Gastrocnemius medialis (tissue), 4 donors: ENCODE measurements at regions of chr10 and their contacts with region 1.

Region 1: DNA sequence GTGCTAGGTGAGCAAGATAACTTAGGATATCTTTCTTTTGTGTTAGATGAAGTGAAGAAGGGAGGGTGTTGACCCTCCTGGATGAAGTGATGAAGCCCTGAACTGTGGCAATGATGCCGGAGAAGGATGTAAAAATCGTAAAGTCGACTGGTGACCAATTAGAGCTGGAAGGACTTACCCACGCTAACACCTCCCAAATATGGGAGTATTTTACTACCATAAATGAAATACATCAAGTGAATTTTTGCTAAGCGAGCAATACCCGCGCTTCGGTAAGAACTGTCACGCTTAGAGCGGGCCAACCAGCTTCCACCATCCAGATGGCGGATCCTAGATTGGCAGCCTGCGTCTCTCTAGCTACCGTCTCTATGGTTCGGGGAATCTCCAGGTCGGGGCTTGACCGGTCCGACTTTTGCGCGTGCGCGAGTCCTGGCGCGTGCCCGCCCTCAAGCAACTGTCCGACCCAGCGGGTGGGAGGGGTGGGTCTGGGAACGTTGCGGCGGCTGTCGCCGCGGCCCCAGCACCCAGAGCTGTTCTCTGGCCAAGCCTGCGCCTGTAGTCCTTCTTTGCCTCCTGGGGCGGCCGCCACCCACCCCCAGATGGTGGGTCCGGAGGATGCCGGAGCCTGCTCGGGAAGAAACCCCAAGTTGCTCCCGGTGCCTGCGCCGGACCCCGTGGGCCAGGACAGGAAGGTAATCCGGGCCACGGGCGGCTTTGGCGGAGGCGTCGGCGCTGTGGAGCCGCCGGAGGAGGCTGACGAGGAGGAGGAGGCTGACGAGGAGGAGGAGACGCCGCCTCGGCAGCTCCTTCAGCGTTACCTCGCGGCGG is at the start of gene TBC1D12:
- DNase-seq: peak; percentile 91 to 94
- ATAC-seq: peak; percentile 90 to 93
- H3K4me3 ChIP-seq: peak within 1 kb of the TSS; percentile 70 to 95 (median 82)
- H3K27ac ChIP-seq: peak within 1 kb of the TSS; percentile 87 to 97 (median 90)
- H3K4me1 ChIP-seq: peaks cover 21% of the 10 kb centered on the region in 2 donors
- H3K27me3 ChIP-seq: peaks cover 0 to 6% (median 3%) of the 10 kb centered on the region in 3 donors
- CTCF ChIP-seq: no peak
- POLR2A ChIP-seq: peak; percentile 78 to 82
- total RNA-seq, gene TBC1D12: 7.4 to 11.4 (median 7.8) TPM

Region 2: DNA sequence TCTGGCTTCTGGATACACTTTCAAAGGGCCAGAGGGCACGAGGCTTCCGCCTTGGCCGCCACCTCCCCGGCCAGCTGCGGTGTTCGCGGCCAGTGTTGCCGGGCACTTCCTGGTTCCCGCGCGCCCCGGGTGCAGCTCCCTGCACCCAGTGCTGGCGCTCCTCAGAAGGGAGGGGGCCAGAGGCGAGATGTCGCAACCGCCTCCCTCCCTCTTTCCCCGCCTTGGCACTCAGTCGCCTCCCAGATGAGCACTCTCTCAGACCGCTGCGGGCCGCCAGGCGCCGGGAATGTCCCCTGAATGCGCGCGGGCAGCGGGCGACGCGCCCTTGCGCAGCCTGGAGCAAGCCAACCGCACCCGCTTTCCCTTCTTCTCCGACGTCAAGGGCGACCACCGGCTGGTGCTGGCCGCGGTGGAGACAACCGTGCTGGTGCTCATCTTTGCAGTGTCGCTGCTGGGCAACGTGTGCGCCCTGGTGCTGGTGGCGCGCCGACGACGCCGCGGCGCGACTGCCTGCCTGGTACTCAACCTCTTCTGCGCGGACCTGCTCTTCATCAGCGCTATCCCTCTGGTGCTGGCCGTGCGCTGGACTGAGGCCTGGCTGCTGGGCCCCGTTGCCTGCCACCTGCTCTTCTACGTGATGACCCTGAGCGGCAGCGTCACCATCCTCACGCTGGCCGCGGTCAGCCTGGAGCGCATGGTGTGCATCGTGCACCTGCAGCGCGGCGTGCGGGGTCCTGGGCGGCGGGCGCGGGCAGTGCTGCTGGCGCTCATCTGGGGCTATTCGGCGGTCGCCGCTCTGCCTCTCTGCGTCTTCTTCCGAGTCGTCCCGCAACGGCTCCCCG is 835.6 kb before region 1 on chr10 and contains the start of gene FFAR4:
- in situ Hi-C with region 1: no loop called
- intact Hi-C with region 1: no loop called
- DNase-seq: peak in 1 of 2 donors; percentile 25
- ATAC-seq: no peak
- H3K4me3 ChIP-seq: peak within 1 kb of the TSS in 3 of 4 donors; percentile 29 to 46 (median 39)
- H3K27ac ChIP-seq: no peak within 1 kb of the TSS
- H3K4me1 ChIP-seq: no peaks in the 10 kb centered on the region
- H3K27me3 ChIP-seq: peaks cover 24 to 32% (median 27%) of the 10 kb centered on the region in 3 donors
- CTCF ChIP-seq: no peak
- POLR2A ChIP-seq: no peak
- total RNA-seq, gene FFAR4: 0.10 to 0.17 TPM in 2 of 4 donors, not detected in the others

Region 3: GRCh38 chr10:93622942-93623341 is 779.3 kb before region 1 on chr10:
- in situ Hi-C with region 1: no loop called
- intact Hi-C with region 1: no loop called
- DNase-seq: no peak
- ATAC-seq: no peak
- H3K4me3 ChIP-seq: no peak overlapping the region
- H3K27ac ChIP-seq: no peak overlapping the region
- H3K4me1 ChIP-seq: no peaks in the 10 kb centered on the region
- H3K27me3 ChIP-seq: no peaks in the 10 kb centered on the region
- CTCF ChIP-seq: no peak
- POLR2A ChIP-seq: no peak

Region 4: GRCh38 chr10:94362360-94363250 is 39.6 kb before region 1 on chr10 and contains the start of gene NOC3L:
- in situ Hi-C with region 1: no loop called
- intact Hi-C with region 1: loop called (anchors 1 kb)
- DNase-seq: peak; percentile 86 to 92
- ATAC-seq: peak; percentile 98 to 99
- H3K4me3 ChIP-seq: peak within 1 kb of the TSS; percentile 60 to 88 (median 78)
- H3K27ac ChIP-seq: peak within 1 kb of the TSS; percentile 72 to 85 (median 78)
- H3K4me1 ChIP-seq: peaks cover 16 to 17% of the 10 kb centered on the region in 2 donors
- H3K27me3 ChIP-seq: no peaks in the 10 kb centered on the region
- CTCF ChIP-seq: peak; percentile 60 to 87 (median 82)
- POLR2A ChIP-seq: no peak
- total RNA-seq, gene NOC3L: 10.3 to 14.5 (median 12.5) TPM

Region 5: GRCh38 chr10:94500063-94500462 is 97.8 kb after region 1 on chr10:
- in situ Hi-C with region 1: no loop called
- intact Hi-C with region 1: no loop called
- DNase-seq: no peak
- ATAC-seq: no peak
- H3K4me3 ChIP-seq: no peak overlapping the region
- H3K27ac ChIP-seq: no peak overlapping the region
- H3K4me1 ChIP-seq: peaks cover 0 to 6% of the 10 kb centered on the region in 2 donors
- H3K27me3 ChIP-seq: no peaks in the 10 kb centered on the region
- CTCF ChIP-seq: no peak
- POLR2A ChIP-seq: no peak

Region 6: DNA sequence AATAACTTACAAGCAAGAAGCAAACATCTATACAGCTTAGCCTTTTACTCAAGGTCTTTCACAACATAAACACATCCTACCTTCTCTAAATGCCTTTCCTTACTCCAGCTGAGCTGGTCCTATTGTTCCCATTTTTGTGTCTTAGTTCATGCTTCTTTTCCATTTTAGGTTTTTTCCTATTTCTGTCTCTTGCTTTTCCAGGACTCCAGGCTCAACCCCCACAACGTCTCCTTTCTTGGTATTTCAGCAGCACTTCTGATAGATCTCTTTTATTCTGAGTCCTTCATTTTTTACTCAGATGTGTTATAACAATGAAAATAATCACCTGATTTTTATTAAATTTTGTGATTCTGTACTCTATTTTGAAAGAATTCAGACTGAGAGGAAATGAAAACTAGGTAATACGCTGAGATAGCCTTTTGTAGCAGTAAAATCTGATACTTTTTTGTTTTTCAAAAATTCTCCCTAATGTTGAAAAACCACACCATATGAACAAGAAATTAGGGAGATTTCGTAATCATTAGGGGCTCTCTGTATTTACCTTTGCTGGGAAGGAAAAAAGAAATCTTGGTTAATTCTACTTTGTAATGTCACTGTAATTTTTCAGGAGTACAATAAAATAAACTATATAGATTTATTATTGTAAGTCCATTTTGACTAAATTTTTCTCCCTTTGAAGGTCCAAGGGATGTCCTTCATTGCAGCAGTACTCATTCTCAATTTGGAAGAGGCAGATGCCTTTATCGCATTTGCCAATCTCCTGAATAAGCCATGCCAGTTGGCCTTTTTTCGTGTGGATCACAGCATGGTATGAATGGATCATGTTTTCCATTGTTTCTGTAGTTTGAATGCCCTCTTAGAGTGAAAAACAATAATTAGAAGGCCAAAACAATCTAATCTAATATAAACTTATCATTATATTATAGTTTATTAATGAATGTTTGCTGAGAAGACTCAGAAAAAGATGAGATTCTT is 119.3 kb after region 1 on chr10:
- in situ Hi-C with region 1: no loop called
- intact Hi-C with region 1: no loop called
- DNase-seq: no peak
- ATAC-seq: no peak
- H3K4me3 ChIP-seq: no peak overlapping the region
- H3K27ac ChIP-seq: no peak overlapping the region
- H3K4me1 ChIP-seq: no peaks in the 10 kb centered on the region
- H3K27me3 ChIP-seq: no peaks in the 10 kb centered on the region
- CTCF ChIP-seq: no peak
- POLR2A ChIP-seq: no peak